Activated naive CD4-positive, alpha-beta T cell treated with anti-CD3 and anti-CD28 coated beads for 36 hours (primary cell): ENCODE measurements at regions of chr19 and their contacts with region 1.

Region 1: DNA sequence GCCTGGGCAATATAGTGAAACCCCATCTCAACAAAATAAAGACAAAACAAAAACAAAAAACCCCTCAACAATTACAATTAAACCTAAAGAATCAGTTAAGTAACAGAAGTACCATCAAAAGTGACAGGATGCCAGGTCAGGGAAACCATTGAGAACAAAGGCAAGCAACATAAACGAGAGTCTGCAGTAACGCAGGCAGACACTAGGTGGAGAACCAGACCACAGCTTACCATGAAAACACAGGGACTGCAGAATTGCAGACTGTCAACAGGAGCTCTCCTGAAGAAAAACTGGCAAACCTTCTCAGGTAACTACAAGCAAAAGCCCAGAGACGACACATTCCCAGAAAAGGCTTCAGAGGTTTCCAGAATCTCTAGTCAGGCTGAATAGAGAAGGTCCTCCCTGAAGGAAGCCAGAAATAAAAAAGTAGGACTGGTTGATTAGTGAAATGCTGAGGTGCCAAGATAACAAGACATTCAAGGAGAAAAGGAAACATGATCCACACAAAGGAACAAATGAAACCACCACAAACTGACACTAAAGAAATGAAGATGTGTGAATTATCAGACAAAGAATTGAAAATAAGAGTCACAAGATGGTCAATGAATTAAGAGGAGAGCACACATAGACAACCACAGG is 2.2 kb upstream of the ZNF665 start:
- DNase-seq: peak; percentile 88
- H3K4me3 Mint-ChIP-seq: no peak overlapping the region
- H3K27ac Mint-ChIP-seq: peak overlapping the region; percentile 37
- H3K4me1 Mint-ChIP-seq: peaks cover 31% of the 10 kb centered on the region
- H3K27me3 Mint-ChIP-seq: peaks cover 2% of the 10 kb centered on the region

Region 2: DNA sequence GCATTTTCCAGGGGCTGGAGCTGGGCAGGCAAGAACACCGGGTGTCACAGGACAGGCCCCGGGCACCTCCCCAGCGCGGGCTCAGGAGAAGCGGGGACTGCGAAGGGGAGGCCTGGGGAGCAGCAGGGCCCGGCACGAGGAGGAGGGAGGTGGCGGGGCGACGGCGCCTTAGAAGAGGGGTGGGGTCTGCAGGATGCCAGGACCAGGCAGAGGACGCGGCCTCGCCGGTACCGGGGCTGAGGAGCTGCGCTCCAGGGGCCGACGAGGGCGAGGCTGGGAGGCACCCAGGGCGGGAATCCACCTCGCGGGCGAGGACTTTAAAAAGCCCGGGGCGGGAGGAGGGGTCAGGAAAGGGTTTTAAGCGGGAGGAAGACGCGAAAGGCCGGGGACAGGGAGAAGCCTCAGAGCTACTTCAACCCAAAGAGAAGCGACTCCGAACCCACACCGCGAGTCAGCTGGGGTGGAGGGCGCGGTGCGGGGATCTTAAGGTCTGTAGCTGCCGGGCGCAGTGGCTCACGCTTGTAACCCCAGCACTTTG is 37.2 kb before region 1 on chr19:
- CTCF ChIA-PET with region 1: no interaction called
- intact Hi-C with region 1: loop called (anchors 1 kb)
- DNase-seq: peak; percentile 60
- H3K4me3 Mint-ChIP-seq: peak overlapping the region; percentile 85
- H3K27ac Mint-ChIP-seq: peak overlapping the region; percentile 72
- H3K4me1 Mint-ChIP-seq: peaks cover 13% of the 10 kb centered on the region
- H3K27me3 Mint-ChIP-seq: no peaks in the 10 kb centered on the region

Region 3: DNA sequence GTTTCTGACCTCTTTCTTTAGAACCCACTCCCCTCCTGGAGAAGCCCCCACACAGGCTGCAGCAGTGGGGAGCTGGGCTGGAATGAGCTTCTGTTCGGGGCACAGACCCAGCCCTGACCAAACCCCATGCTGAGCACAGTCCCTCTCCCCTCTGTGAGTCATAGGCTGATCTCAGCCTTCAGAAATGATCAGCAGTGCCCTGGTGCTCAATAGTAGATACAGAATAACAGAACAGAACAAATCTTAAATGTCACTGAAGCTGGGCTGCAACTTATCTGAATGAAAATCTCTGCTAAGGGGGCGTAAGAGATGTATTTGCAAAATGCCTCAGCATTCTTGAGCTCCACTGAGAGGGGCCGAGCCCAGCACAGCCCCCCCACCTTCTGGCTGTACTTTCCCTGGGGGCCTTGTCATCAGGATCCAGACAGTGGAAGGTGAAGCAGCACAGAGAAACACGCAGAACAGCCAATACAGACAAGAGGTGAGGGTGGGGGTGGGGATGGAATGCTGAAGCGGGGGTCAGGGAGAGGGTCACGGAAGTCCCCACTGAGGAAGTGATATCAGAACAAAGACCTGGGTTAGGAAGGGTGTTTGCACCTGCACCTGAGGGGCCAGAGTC is 12.1 kb before region 1 on chr19:
- CTCF ChIA-PET with region 1: no interaction called
- intact Hi-C with region 1: no loop called
- DNase-seq: no peak
- H3K4me3 Mint-ChIP-seq: no peak overlapping the region
- H3K27ac Mint-ChIP-seq: no peak overlapping the region
- H3K4me1 Mint-ChIP-seq: no peaks in the 10 kb centered on the region
- H3K27me3 Mint-ChIP-seq: no peaks in the 10 kb centered on the region

Region 4: GRCh38 chr19:53365134-53365898 is 169.9 kb after region 1 on chr19 and contains the start of gene ZNF525:
- CTCF ChIA-PET with region 1: no interaction called
- intact Hi-C with region 1: loop called (anchors 1 kb)
- DNase-seq: peak; percentile 97
- H3K4me3 Mint-ChIP-seq: peak within 1 kb of the TSS; percentile 91
- H3K27ac Mint-ChIP-seq: peak within 1 kb of the TSS; percentile 89
- H3K4me1 Mint-ChIP-seq: peaks cover 17% of the 10 kb centered on the region
- H3K27me3 Mint-ChIP-seq: no peaks in the 10 kb centered on the region
- total RNA-seq, gene ZNF525: 16.2 to 17.4 TPM

Region 5: GRCh38 chr19:53520550-53521372 is 325.4 kb after region 1 on chr19:
- CTCF ChIA-PET with region 1: interaction called, 5 read pairs
- intact Hi-C with region 1: loop called (anchors 10 kb)
- DNase-seq: peak; percentile 93
- H3K4me3 Mint-ChIP-seq: peak overlapping the region; percentile 99
- H3K27ac Mint-ChIP-seq: peak overlapping the region; percentile 83
- H3K4me1 Mint-ChIP-seq: peaks cover 17% of the 10 kb centered on the region
- H3K27me3 Mint-ChIP-seq: no peaks in the 10 kb centered on the region

Region 6: DNA sequence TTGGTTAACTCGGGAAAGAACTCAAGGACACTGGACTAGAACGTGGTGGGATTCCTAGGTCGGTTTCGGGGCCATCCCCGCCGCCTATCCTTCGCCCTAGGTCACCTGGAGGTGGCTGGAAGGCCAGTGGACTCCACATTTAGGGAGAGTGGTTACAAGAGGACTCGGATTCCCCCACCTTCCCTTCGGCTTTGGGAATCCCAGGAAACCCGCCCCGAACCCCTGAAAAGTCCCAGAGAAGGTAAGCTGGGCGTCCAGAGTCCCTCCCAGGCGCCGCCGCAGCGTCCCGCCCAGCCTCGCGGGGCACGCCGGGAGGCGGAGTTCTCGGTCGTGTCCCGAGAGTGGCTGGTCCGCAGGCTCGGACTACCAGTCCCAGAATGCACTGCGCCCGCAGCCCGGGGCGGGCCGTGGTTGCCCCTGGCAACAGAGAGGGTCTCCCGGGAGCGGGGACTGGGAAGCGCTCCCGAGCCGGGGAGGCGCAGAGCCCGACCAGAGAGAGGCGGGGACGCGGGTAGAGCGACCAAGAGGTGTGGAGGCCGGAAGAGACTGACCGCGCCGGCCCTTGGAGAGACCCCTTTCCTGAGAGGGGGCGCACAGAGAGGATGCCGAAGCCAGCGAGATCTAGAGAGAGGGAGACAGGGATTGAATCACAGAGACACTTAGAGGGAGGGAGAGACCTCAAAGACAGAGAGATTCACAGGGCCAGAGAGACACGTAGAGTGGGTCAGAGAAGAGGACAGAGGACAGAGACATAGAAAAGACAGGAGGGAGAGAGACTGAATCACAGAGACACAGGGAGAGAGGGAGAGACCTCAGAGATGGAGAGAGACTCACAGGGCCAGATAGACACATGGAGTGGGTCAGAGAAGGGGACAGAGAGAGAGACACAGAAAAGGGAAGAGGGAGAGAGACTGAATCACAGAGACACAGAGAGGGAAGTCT is 684.0 kb after region 1 on chr19:
- CTCF ChIA-PET with region 1: no interaction called
- intact Hi-C with region 1: loop called (anchors 5 kb)
- DNase-seq: peak; percentile 85
- H3K4me3 Mint-ChIP-seq: no peak overlapping the region
- H3K27ac Mint-ChIP-seq: peak overlapping the region; percentile 14
- H3K4me1 Mint-ChIP-seq: peaks cover 47% of the 10 kb centered on the region
- H3K27me3 Mint-ChIP-seq: peaks cover 12% of the 10 kb centered on the region